MCF 10A (cell line): ENCODE measurements at regions of chr5 and their contacts with region 1.

Region 1: GRCh38 chr5:123671042-123671441 is 159.1 kb downstream of the CSNK1G3 start:
- DNase-seq: peak; percentile 75
- H3K4me3 Mint-ChIP-seq: no peak overlapping the region
- H3K27ac Mint-ChIP-seq: no peak overlapping the region
- H3K4me1 Mint-ChIP-seq: no peaks in the 10 kb centered on the region
- H3K27me3 Mint-ChIP-seq: no peaks in the 10 kb centered on the region
- CTCF ChIP-seq: peak; percentile 88

Region 2: GRCh38 chr5:123937230-123937629 is 266.2 kb after region 1 on chr5:
- CTCF ChIA-PET with region 1: interaction called, 6 read pairs
- POLR2A ChIA-PET with region 1: no interaction called
- intact Hi-C with region 1: loop called (anchors 2 kb)
- DNase-seq: peak; percentile 85
- H3K4me3 Mint-ChIP-seq: no peak overlapping the region
- H3K27ac Mint-ChIP-seq: no peak overlapping the region
- H3K4me1 Mint-ChIP-seq: peaks cover 7% of the 10 kb centered on the region
- H3K27me3 Mint-ChIP-seq: no peaks in the 10 kb centered on the region
- CTCF ChIP-seq: peak; percentile 86

Region 3: DNA sequence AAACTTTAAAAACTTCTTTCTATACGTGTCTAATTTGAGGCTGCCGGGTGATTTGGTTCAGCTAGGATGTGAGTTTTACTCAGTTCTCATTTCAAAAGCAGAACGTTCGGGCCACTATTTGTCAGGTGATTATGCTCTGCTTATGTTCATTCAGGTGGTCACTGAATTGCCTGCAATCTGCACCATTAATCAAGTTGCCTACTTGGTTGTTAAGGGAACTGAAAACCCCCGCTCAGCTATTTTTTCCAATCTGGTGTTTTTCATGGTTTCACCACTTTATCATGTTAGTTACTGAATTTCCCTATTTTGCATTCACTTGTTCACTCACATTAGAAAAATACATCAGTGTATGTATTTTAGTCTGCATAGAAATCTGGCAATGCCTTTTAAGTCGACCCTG is 363.9 kb after region 1 on chr5:
- CTCF ChIA-PET with region 1: no interaction called
- POLR2A ChIA-PET with region 1: no interaction called
- intact Hi-C with region 1: loop called (anchors 10 kb)
- DNase-seq: no peak
- H3K4me3 Mint-ChIP-seq: no peak overlapping the region
- H3K27ac Mint-ChIP-seq: no peak overlapping the region
- H3K4me1 Mint-ChIP-seq: no peaks in the 10 kb centered on the region
- H3K27me3 Mint-ChIP-seq: no peaks in the 10 kb centered on the region
- CTCF ChIP-seq: no peak

Region 4: GRCh38 chr5:124824637-124825158 is 1153.7 kb after region 1 on chr5:
- CTCF ChIA-PET with region 1: no interaction called
- POLR2A ChIA-PET with region 1: no interaction called
- intact Hi-C with region 1: loop called (anchors 10 kb)
- DNase-seq: peak; percentile 96
- H3K4me3 Mint-ChIP-seq: peak overlapping the region; percentile 55
- H3K27ac Mint-ChIP-seq: peak overlapping the region; percentile 89
- H3K4me1 Mint-ChIP-seq: peaks cover 33% of the 10 kb centered on the region
- H3K27me3 Mint-ChIP-seq: no peaks in the 10 kb centered on the region
- CTCF ChIP-seq: no peak

Region 5: GRCh38 chr5:124902097-124902821 is 1231.2 kb after region 1 on chr5:
- CTCF ChIA-PET with region 1: no interaction called
- POLR2A ChIA-PET with region 1: no interaction called
- intact Hi-C with region 1: loop called (anchors 10 kb)
- DNase-seq: no peak
- H3K4me3 Mint-ChIP-seq: no peak overlapping the region
- H3K27ac Mint-ChIP-seq: no peak overlapping the region
- H3K4me1 Mint-ChIP-seq: peaks cover 11% of the 10 kb centered on the region
- H3K27me3 Mint-ChIP-seq: no peaks in the 10 kb centered on the region
- CTCF ChIP-seq: no peak